ENCODE measurements at regions of chr9 and their contacts with region 1.

Region 1: GRCh38 chr9:86202338-86202882 is 57.0 kb downstream of the C9orf153 start:
- DNase-seq: peak; percentile 33
- ATAC-seq: peak; percentile 78
- H3K4me3 Mint-ChIP-seq: no peak overlapping the region
- H3K27ac Mint-ChIP-seq: no peak overlapping the region
- H3K4me1 Mint-ChIP-seq: no peaks in the 10 kb centered on the region
- H3K27me3 Mint-ChIP-seq: no peaks in the 10 kb centered on the region
- CTCF ChIP-seq: peak; percentile 76

Region 2: GRCh38 chr9:86168256-86168655 is 34.2 kb before region 1 on chr9:
- CTCF ChIA-PET with region 1: interaction called, 15 read pairs
- POLR2A ChIA-PET with region 1: no interaction called
- intact Hi-C with region 1: no loop called
- DNase-seq: no peak
- ATAC-seq: no peak
- H3K4me3 Mint-ChIP-seq: no peak overlapping the region
- H3K27ac Mint-ChIP-seq: no peak overlapping the region
- H3K4me1 Mint-ChIP-seq: no peaks in the 10 kb centered on the region
- H3K27me3 Mint-ChIP-seq: no peaks in the 10 kb centered on the region
- CTCF ChIP-seq: no peak

Region 3: GRCh38 chr9:86217076-86217755 is 14.8 kb after region 1 on chr9:
- CTCF ChIA-PET with region 1: interaction called, 16 read pairs
- POLR2A ChIA-PET with region 1: no interaction called
- intact Hi-C with region 1: no loop called
- DNase-seq: no peak
- ATAC-seq: no peak
- H3K4me3 Mint-ChIP-seq: no peak overlapping the region
- H3K27ac Mint-ChIP-seq: no peak overlapping the region
- H3K4me1 Mint-ChIP-seq: no peaks in the 10 kb centered on the region
- H3K27me3 Mint-ChIP-seq: peaks cover 2% of the 10 kb centered on the region
- CTCF ChIP-seq: no peak

Region 4: GRCh38 chr9:86246752-86247161 is 44.3 kb after region 1 on chr9:
- CTCF ChIA-PET with region 1: no interaction called
- POLR2A ChIA-PET with region 1: no interaction called
- intact Hi-C with region 1: no loop called
- DNase-seq: no peak
- ATAC-seq: no peak
- H3K4me3 Mint-ChIP-seq: no peak overlapping the region
- H3K27ac Mint-ChIP-seq: no peak overlapping the region
- H3K4me1 Mint-ChIP-seq: no peaks in the 10 kb centered on the region
- H3K27me3 Mint-ChIP-seq: peaks cover 5% of the 10 kb centered on the region
- CTCF ChIP-seq: no peak

Region 5: GRCh38 chr9:86585422-86586143 is 383.2 kb after region 1 on chr9:
- CTCF ChIA-PET with region 1: no interaction called
- POLR2A ChIA-PET with region 1: no interaction called
- intact Hi-C with region 1: no loop called
- DNase-seq: no peak
- ATAC-seq: no peak
- H3K4me3 Mint-ChIP-seq: no peak overlapping the region
- H3K27ac Mint-ChIP-seq: no peak overlapping the region
- H3K4me1 Mint-ChIP-seq: no peaks in the 10 kb centered on the region
- H3K27me3 Mint-ChIP-seq: peaks cover 8% of the 10 kb centered on the region
- CTCF ChIP-seq: no peak